Motor neuron (in vitro differentiated cells): ENCODE measurements at regions of chr2 and their contacts with region 1.

Region 1: GRCh38 chr2:120693121-120693520 is 42.5 kb upstream of the GLI2 start:
- ATAC-seq: no peak
- H3K4me3 ChIP-seq: no peak overlapping the region
- H3K27ac ChIP-seq: no peak overlapping the region
- H3K4me1 ChIP-seq: peaks cover 0 to 3% of the 10 kb centered on the region in 2 donors

Region 2: GRCh38 chr2:120539937-120540718 is 153.0 kb before region 1 on chr2:
- in situ Hi-C with region 1: no loop called
- ATAC-seq: peak; percentile 77 to 97 (median 90)
- H3K4me3 ChIP-seq: no peak overlapping the region
- H3K27ac ChIP-seq: no peak overlapping the region
- H3K4me1 ChIP-seq: peaks cover 17 to 19% of the 10 kb centered on the region in 2 donors

Region 3: GRCh38 chr2:120596990-120597594 is 96.0 kb before region 1 on chr2:
- in situ Hi-C with region 1: no loop called
- ATAC-seq: peak in 5 of 8 experiments; percentile 37 to 63 (median 59)
- H3K4me3 ChIP-seq: no peak overlapping the region
- H3K27ac ChIP-seq: peak overlapping the region in 1 of 2 donors; percentile 73
- H3K4me1 ChIP-seq: peaks cover 33 to 37% of the 10 kb centered on the region in 2 donors

Region 4: DNA sequence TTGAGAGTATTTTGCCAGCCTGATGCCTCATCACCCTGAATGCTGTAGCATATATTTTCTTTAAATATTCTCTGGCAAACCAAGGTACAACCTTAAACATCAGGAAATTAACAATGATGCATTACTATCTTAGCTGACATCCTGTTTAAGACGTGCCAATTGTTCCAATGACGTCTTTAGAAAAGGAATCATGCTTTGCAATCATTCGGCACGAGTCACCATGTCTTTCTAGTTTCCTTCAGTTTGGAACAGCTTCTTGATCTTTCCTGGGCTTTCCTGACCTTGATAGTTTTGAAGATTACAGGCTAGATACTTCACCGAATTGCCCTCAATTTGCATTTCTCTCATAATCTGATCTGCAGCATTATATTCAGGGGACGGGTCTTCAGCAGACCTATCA is 45.6 kb before region 1 on chr2:
- in situ Hi-C with region 1: no loop called
- ATAC-seq: no peak
- H3K4me3 ChIP-seq: no peak overlapping the region
- H3K27ac ChIP-seq: no peak overlapping the region
- H3K4me1 ChIP-seq: no peaks in the 10 kb centered on the region

Region 5: GRCh38 chr2:121038891-121039616 is 345.9 kb after region 1 on chr2:
- in situ Hi-C with region 1: no loop called
- ATAC-seq: peak in 6 of 8 experiments; percentile 29 to 91 (median 58)
- H3K4me3 ChIP-seq: no peak overlapping the region
- H3K27ac ChIP-seq: no peak overlapping the region
- H3K4me1 ChIP-seq: no peaks in the 10 kb centered on the region

Region 6: GRCh38 chr2:121071034-121071504 is 377.9 kb after region 1 on chr2:
- in situ Hi-C with region 1: loop called in 8 of 9 experiments (anchors 5 to 10 kb)
- ATAC-seq: peak; percentile 12 to 46 (median 38)
- H3K4me3 ChIP-seq: no peak overlapping the region
- H3K27ac ChIP-seq: no peak overlapping the region
- H3K4me1 ChIP-seq: peaks cover 21 to 28% of the 10 kb centered on the region in 2 donors